ENCODE measurements at regions of chr17 and their contacts with region 1.

Region 1: DNA sequence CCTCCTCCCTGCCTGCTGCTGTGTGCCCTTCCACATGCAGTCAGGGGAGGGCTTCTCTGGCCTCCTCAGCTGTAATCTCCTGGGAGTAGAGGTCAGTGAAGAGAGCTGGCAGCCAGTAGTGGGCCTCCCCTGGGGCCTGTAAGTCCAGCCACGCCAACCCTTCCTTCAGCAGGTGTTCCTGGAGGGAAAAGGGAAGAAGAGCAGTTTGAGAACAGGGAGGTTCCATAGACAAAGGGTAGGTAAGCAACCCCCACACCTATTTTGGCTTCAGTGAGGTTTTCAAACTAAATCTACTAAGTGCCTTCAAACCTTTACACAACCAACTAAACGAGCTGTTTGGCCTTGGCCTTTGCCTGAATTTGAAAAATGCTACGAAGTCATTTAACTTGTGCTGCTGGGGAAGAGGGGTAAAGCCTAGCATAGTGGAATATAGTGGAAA is 14.2 kb downstream of the SNF8 start:
- DNase-seq: no peak
- CTCF ChIP-seq: no peak

Region 2: DNA sequence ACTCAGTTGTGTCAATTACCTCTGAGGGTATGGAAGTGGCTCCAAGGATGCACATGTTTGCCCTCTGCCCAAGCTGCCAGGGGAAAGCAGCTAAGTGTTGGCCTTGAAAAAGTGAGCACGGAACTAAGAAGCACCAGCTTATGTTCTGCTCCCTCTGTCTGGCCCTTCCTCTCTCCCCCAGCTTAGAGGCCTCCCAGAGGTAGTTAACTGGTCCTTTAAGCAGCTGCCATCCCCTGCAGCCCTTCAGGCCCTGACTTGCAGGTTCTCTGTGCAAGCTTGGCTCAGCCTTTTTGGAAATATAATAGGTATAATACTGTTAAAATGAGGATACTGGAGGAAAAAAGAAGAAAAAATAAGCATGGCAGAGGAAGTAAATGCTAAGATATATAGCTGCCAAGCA is 29.2 kb before region 1 on chr17:
- CTCF ChIA-PET with region 1: no interaction called
- POLR2A ChIA-PET with region 1: no interaction called
- DNase-seq: no peak
- CTCF ChIP-seq: no peak

Region 3: GRCh38 chr17:48915459-48916282 is 14.8 kb before region 1 on chr17:
- CTCF ChIA-PET with region 1: interaction called, 10 read pairs
- POLR2A ChIA-PET with region 1: interaction called, 5 read pairs
- DNase-seq: peak; percentile 76
- CTCF ChIP-seq: no peak

Region 4: DNA sequence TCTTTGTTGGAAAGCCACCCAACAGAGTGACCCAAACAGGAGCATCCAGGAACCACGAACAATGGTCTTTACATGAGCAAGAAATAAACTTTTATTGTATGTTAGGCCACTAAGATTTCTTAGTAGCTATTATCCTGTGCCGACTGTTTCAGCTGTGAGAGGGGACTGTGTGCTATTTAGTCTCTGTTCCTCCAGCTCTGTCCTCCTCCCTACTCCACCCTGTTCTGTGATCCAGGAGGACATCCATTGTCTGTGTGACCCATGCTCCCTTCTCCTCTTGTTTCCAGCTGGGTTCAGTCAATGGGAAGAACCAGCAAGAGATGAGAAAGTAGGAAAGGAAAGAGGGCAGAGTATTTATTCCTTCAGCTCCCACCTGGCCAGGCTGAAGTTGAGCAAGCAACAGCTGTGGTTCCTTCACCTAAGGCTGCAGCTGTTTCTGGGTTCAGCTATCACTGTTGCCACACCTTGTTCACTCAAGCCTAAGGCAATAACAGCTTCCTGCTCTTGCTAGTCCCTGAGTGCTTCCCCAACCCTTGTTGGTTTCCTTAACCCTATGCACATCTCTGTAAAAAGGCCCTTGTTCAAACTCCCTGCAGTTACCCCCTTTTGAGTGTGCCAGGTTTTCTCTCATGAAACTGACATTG is 187.3 kb after region 1 on chr17:
- CTCF ChIA-PET with region 1: no interaction called
- POLR2A ChIA-PET with region 1: no interaction called
- DNase-seq: no peak
- CTCF ChIP-seq: no peak

Measured in GM10248 (cell line).